ENCODE measurements at regions of chr3 and their contacts with region 1.

Region 1: DNA sequence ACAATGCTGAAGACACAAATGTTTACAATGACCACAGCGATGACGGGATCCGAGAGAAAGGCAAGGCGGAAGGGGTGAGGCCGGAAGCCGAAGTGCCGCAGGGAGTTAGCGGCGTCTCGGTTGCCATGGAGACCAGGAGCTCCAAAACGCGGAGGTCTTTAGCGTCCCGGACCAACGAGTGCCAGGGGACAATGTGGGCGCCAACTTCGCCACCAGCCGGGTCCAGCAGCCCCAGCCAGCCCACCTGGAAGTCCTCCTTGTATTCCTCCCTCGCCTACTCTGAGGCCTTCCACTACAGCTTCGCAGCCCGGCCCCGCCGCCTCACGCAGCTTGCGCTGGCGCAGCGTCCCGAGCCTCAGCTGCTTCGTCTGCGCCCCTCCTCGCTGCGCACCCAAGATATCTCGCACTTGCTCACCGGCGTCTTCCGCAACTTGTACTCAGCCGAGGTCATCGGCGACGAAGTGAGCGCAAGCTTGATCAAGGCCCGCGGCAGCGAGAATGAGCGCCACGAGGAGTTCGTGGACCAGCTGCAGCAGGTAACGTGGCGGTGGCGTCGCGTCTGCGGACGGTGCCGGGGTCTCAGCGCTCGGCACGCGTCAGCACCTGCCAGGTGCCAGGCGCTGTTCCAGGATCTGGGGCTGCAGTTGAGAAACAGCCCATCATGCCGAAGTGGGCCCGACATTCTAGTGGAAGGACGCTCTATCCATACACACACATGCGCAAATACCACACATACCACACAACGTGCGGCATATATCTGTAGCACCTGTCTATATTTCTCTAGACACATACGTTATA is at the start of gene DLEC1:
- DNase-seq: peak; percentile 56 to 93 (median 83)
- ATAC-seq: peak; percentile 66 to 72
- H3K4me3 Mint-ChIP-seq: peak within 1 kb of the TSS; percentile 69 to 95 (median 86)
- H3K27ac Mint-ChIP-seq: peak within 1 kb of the TSS; percentile 86 to 96 (median 94)
- H3K4me1 Mint-ChIP-seq: peaks cover 27 to 33% (median 30%) of the 10 kb centered on the region in 4 donors
- H3K27me3 Mint-ChIP-seq: peaks cover 0 to 5% (median 4%) of the 10 kb centered on the region in 5 donors
- polyA plus RNA-seq, gene DLEC1: 0.31 to 0.37 (median 0.35) TPM

Region 2: DNA sequence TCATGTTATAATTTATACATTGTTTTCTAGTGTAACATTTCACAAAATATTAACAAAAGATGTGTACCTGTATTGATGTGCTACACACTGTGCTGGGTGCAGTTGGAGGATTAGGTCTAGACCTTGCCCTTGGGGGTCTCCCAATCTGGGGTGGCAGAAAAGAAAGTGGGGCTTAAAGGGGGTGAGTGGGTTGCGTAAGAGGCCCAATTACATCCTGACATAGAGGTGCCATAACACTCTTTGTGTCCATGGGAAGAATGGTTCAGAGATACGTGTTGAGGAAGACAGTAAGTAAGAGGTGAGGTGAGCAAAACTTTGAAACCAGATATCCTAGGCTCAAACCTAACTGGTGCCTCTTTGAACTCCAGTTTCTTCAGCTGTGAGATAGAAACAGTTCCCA is 30.7 kb after region 1 on chr3:
- POLR2A ChIA-PET with region 1: no interaction called
- DNase-seq: no peak
- ATAC-seq: no peak
- H3K4me3 Mint-ChIP-seq: no peak overlapping the region
- H3K27ac Mint-ChIP-seq: no peak overlapping the region
- H3K4me1 Mint-ChIP-seq: no peaks in the 10 kb centered on the region
- H3K27me3 Mint-ChIP-seq: no peaks in the 10 kb centered on the region

Region 3: DNA sequence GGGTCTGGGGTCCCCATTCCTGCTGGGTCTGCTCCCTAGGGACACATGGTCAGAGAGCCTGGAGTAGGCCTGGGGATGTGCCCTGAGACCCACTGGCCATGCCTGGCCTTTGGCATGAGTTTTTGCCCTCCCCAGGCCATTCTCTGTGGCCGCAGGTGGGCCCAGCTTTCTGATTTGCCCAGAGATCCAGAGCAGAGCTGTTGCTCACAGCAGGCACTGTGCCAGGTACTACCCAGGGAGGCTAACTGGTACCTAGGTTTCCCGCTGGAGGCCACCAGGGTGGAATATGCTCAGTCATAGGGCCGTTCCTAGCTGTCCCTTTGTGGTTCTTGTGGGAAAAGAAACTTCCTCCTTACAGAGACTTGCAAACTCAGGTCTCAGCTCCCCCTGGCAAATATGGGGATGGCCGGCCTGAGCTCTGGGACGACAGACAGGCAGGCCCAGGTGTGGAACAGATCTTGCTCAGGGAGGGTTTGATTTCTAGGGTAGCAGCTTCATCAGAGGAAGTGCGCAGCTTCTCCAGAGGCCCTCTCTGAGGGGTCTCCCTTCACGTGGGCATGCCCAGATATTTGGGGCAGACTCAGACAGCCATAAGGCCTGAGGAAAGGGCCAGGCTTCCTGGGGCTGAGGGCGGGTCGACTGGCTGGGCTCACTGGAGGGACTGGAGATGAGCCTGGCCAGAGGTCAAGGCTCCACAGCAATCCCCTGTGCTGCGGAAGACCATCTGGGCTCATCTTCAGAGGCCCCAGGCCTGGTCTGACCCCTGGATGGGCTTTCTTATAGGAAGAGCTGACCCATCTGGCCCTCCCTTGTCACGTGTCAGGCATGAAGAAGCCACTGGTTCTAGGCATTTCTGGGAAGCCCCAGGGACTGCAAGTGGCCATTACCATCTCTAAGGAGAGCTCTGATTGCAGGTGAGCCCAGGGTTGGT is 69.6 kb after region 1 on chr3:
- POLR2A ChIA-PET with region 1: no interaction called
- DNase-seq: peak in 1 of 10 donors; percentile 59
- ATAC-seq: no peak
- H3K4me3 Mint-ChIP-seq: no peak overlapping the region
- H3K27ac Mint-ChIP-seq: no peak overlapping the region
- H3K4me1 Mint-ChIP-seq: peaks cover 0 to 2% (median 0%) of the 10 kb centered on the region in 4 donors
- H3K27me3 Mint-ChIP-seq: peaks cover 0 to 4% (median 0%) of the 10 kb centered on the region in 5 donors

Region 4: GRCh38 chr3:38164966-38165680 is 125.8 kb after region 1 on chr3 and contains the start of gene OXSR1:
- POLR2A ChIA-PET with region 1: interaction called, 12 read pairs
- DNase-seq: peak; percentile 91 to 99 (median 98)
- ATAC-seq: peak; percentile 89
- H3K4me3 Mint-ChIP-seq: peak within 1 kb of the TSS; percentile 88 to 97 (median 95)
- H3K27ac Mint-ChIP-seq: peak within 1 kb of the TSS; percentile 99 to 100 (median 100)
- H3K4me1 Mint-ChIP-seq: peaks cover 21 to 48% (median 47%) of the 10 kb centered on the region in 4 donors
- H3K27me3 Mint-ChIP-seq: no peaks in the 10 kb centered on the region
- polyA plus RNA-seq, gene OXSR1: 12.9 to 14.0 (median 13.1) TPM

Measured in naive thymus-derived CD8-positive, alpha-beta T cell (primary cell).